Gastrocnemius medialis (tissue), 4 donors: ENCODE measurements at regions of chrX and their contacts with region 1.

Region 1: GRCh38 chrX:129522184-129523078 is 859 bp downstream of the SMARCA1 start:
- DNase-seq: peak in 1 of 2 donors; percentile 32
- ATAC-seq: peak; percentile 77 to 85
- H3K4me3 ChIP-seq: peak overlapping the region; percentile 73 to 94 (median 86)
- H3K27ac ChIP-seq: peak overlapping the region; percentile 87 to 92 (median 89)
- H3K4me1 ChIP-seq: no peaks in the 10 kb centered on the region
- H3K27me3 ChIP-seq: no peaks in the 10 kb centered on the region
- CTCF ChIP-seq: peak in 1 of 5 experiments; percentile 28
- POLR2A ChIP-seq: no peak

Region 2: DNA sequence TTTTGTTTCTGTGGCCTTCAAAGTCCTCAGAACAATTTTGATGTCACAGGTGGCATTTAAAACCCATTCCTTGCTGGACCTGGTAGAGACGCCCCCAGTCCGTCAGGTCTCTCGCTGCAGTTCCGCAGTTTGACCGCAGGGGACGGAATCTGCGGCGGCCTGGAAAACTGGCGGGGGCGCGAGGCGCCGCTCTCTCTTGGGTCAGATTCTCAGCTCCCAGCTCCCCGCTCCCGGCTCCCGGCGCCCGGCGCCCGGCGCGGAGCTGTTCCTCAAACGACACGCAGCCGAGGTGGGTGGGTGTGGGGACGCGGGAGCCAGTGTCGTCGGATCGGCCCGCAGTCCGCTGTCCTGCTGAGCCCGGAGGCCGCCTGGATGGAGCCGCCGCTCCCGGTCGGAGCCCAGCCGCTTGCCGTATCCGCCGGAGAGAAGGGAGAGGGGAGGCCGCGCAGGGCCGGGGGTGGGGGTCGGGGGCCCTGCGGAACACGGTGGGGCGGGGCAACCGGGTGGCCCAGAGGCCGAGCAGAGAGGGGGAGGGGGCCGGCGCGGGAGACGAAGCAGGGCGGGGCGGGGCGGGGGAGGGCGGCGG is 17.7 kb after region 1 on chrX and contains the start of gene OCRL:
- in situ Hi-C with region 1: no loop called
- intact Hi-C with region 1: loop called (anchors 2 kb)
- DNase-seq: peak; percentile 31 to 57
- ATAC-seq: peak; percentile 87 to 88
- H3K4me3 ChIP-seq: peak within 1 kb of the TSS; percentile 68 to 87 (median 75)
- H3K27ac ChIP-seq: peak within 1 kb of the TSS; percentile 89 to 93 (median 91)
- H3K4me1 ChIP-seq: peaks cover 3 to 17% of the 10 kb centered on the region in 2 donors
- H3K27me3 ChIP-seq: no peaks in the 10 kb centered on the region
- CTCF ChIP-seq: peak; percentile 69 to 82 (median 81)
- POLR2A ChIP-seq: peak; percentile 38 to 45
- total RNA-seq, gene OCRL: 6.7 to 10.8 (median 8.6) TPM

Region 3: GRCh38 chrX:129905787-129906580 is 383.6 kb after region 1 on chrX and contains the start of gene UTP14A:
- in situ Hi-C with region 1: no loop called
- intact Hi-C with region 1: loop called (anchors 10 kb)
- DNase-seq: peak; percentile 75 to 84
- ATAC-seq: peak; percentile 99
- H3K4me3 ChIP-seq: peak within 1 kb of the TSS; percentile 61 to 86 (median 81)
- H3K27ac ChIP-seq: peak within 1 kb of the TSS; percentile 82 to 86 (median 86)
- H3K4me1 ChIP-seq: peaks cover 0 to 7% of the 10 kb centered on the region in 2 donors
- H3K27me3 ChIP-seq: no peaks in the 10 kb centered on the region
- CTCF ChIP-seq: no peak
- POLR2A ChIP-seq: peak in 1 of 2 donors; percentile 37
- total RNA-seq, gene UTP14A: 10.0 to 13.9 (median 10.9) TPM